ENCODE measurements at regions of chr4 and their contacts with region 1.

Region 1: GRCh38 chr4:38132107-38132673 is 172.0 kb downstream of the PTTG2 start:
- DNase-seq: peak; percentile 93
- H3K4me3 Mint-ChIP-seq: peak overlapping the region; percentile 76
- H3K27ac Mint-ChIP-seq: peak overlapping the region; percentile 87
- H3K4me1 Mint-ChIP-seq: peaks cover 52% of the 10 kb centered on the region
- H3K27me3 Mint-ChIP-seq: peaks cover 2% of the 10 kb centered on the region

Region 2: DNA sequence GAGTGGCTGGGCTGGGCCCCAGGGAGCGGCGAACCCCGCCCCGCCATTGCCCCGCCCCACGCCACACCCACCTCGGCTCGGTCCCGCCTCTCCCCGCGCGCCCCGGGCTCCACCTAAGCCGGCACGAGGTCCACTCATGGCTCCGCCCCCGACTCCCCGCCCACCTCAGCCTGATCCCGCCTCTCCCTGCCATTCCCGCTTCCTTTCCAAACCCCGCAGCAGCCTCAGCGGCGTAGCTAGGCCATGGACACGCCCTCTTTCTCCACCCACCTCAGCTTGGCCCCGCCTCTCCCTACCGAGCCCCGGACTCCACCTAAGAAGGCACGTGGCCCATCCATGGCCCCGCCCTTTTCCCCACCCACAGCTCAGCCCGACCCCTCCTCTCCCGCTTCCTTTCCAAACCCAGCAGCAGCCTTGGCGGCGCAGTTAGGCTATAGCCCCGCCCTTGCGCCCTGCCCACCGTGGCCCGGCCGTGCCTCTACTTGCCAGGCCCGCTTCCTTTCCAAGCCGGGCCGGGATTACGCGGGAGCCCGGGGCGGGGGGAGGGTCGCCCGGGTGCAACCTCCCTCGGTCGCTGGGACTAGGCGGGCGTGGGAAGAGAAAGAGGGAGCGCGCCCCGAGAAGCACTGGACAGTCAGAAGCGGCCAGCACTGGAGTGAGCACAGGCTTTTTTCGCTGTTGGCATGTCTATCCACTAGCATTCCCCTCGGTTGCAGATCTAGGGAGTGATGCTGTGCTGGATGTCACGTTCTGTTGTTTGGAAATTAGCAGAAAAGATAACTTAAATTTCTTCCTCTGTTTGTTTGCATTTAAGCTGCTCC is 445.6 kb before region 1 on chr4 and contains the start of gene RELL1:
- intact Hi-C with region 1: loop called (anchors 10 kb)
- DNase-seq: peak; percentile 100
- H3K4me3 Mint-ChIP-seq: peak within 1 kb of the TSS; percentile 91
- H3K27ac Mint-ChIP-seq: peak within 1 kb of the TSS; percentile 96
- H3K4me1 Mint-ChIP-seq: peaks cover 36% of the 10 kb centered on the region
- H3K27me3 Mint-ChIP-seq: peaks cover 8% of the 10 kb centered on the region
- total RNA-seq, gene RELL1: 15.7 and 19.1 TPM in 2 replicates

Region 3: GRCh38 chr4:37977471-37978247 is 154.5 kb before region 1 on chr4:
- intact Hi-C with region 1: loop called (anchors 5 kb)
- DNase-seq: peak; percentile 93
- H3K4me3 Mint-ChIP-seq: peak overlapping the region; percentile 87
- H3K27ac Mint-ChIP-seq: peak overlapping the region; percentile 86
- H3K4me1 Mint-ChIP-seq: peaks cover 24% of the 10 kb centered on the region
- H3K27me3 Mint-ChIP-seq: peaks cover 2% of the 10 kb centered on the region

Region 4: DNA sequence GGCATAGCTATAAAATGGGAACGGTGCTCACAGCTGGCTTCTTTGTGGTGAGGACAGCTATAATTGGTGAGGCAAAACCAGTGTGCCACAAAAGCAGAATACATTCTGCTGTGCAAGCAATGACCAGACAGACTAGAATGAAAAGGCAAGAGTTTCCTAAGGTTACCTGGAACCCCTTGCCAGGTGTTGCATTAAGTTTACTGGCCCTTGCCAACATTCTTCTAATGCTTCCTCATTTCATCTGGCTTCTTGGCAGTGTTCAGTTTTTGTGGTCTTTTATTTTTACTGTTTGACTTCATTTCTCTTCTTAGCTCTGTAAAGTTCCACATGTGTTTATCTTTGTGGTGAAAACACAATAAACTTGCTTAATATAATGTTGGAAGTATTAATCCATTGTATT is 40.6 kb before region 1 on chr4:
- intact Hi-C with region 1: loop called (anchors 1 kb)
- DNase-seq: no peak
- H3K4me3 Mint-ChIP-seq: no peak overlapping the region
- H3K27ac Mint-ChIP-seq: no peak overlapping the region
- H3K4me1 Mint-ChIP-seq: peaks cover 17% of the 10 kb centered on the region
- H3K27me3 Mint-ChIP-seq: no peaks in the 10 kb centered on the region

Region 5: DNA sequence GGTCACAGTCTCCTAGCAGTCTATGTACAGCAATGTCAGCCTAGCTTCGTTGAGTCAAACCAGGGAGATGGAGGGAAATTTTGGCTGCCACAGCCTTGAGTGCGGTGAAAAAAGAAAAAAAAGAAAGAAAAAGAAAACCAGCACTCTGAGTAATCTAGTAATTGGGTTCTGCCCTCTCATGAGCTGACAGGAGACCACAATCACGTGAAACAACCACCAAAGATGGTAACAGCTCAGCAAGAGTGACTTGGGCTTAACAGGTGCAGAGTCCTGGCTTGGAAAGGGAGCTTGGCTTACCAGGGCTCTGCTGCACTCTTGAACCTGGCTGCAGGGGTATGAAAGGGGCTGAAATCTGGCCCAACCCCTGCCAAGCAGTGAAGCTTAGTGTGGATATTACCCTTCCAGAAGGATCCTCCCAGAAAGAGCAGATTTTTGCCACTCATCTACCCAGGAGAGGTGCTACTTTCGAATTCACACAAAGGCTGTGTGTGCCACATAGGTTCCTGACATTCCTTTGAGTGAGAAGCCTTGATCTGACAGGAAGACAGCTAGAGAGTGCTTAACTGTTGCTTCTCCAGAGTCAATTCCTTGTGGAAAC is 178.4 kb after region 1 on chr4:
- intact Hi-C with region 1: loop called (anchors 1 kb)
- DNase-seq: peak; percentile 94
- H3K4me3 Mint-ChIP-seq: peak overlapping the region; percentile 66
- H3K27ac Mint-ChIP-seq: peak overlapping the region; percentile 83
- H3K4me1 Mint-ChIP-seq: peaks cover 49% of the 10 kb centered on the region
- H3K27me3 Mint-ChIP-seq: peaks cover 47% of the 10 kb centered on the region

Region 6: GRCh38 chr4:38804654-38805295 is 672.6 kb after region 1 on chr4 and contains the start of gene TLR1:
- intact Hi-C with region 1: loop called (anchors 2 kb)
- DNase-seq: peak; percentile 79
- H3K4me3 Mint-ChIP-seq: peak within 1 kb of the TSS; percentile 81
- H3K27ac Mint-ChIP-seq: peak within 1 kb of the TSS; percentile 86
- H3K4me1 Mint-ChIP-seq: peaks cover 29% of the 10 kb centered on the region
- H3K27me3 Mint-ChIP-seq: no peaks in the 10 kb centered on the region
- total RNA-seq, gene TLR1: 0.85 and 2.6 TPM in 2 replicates

Region 7: GRCh38 chr4:39353478-39354253 is 1221.5 kb after region 1 on chr4:
- intact Hi-C with region 1: loop called (anchors 5 kb)
- DNase-seq: peak; percentile 82
- H3K4me3 Mint-ChIP-seq: peak overlapping the region; percentile 78
- H3K27ac Mint-ChIP-seq: peak overlapping the region; percentile 92
- H3K4me1 Mint-ChIP-seq: peaks cover 53% of the 10 kb centered on the region
- H3K27me3 Mint-ChIP-seq: no peaks in the 10 kb centered on the region